ENCODE measurements at regions of chrX and their contacts with region 1.

Region 1: DNA sequence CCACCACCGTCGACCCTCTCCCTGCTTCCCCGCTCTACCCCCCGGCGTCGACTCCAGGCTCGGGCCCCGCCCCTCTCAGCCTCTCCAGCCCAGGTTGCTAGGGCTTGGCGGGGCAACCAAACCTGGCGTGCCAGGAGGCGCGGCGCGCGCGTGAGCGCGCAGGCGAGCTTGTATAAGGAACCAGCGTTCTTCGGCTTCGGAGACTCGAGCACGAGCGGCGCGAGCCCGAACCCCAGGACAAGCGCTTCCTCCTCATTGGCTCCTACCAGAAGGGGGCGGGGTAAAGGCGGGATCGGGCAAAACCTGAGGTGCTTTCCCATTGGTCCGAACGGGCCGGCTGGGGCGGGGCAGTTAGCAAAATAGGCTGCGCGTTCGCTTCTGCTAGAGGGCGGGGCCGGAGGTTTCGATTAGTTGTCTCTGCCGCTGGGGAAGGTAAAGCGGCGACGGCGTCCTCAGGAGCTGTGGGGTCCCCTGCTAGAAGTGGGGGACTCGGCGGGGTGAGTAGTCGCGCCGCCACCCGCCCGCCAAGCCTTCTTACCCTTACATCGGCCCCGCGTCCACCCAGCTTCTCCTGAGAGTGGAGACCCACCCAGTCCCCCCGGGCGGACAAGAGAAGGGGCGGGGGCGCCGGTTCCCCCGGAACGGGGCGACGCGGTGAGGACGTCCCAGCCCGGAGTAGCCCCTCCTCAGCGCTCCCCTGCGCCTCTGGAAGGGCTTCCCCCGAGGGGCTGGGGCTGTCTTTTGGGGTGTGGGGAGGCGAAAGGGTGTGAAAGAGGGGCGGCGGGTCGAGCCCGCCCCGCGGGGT is at the start of gene CDKL5:
- DNase-seq: peak; percentile 95
- ATAC-seq: peak; percentile 92
- H3K4me3 ChIP-seq: peak within 1 kb of the TSS; percentile 71 to 91 (median 75)
- H3K4me3 Mint-ChIP-seq: peak within 1 kb of the TSS; percentile 92
- H3K27ac ChIP-seq: peak within 1 kb of the TSS; percentile 82 to 86
- H3K27ac Mint-ChIP-seq: peak within 1 kb of the TSS; percentile 94
- H3K4me1 ChIP-seq: peaks cover 8 to 12% of the 10 kb centered on the region in 2 donors
- H3K4me1 Mint-ChIP-seq: peaks cover 12% of the 10 kb centered on the region
- H3K27me3 ChIP-seq: no peaks in the 10 kb centered on the region
- H3K27me3 Mint-ChIP-seq: no peaks in the 10 kb centered on the region
- CTCF ChIP-seq: no peak
- total RNA-seq, gene CDKL5: 4.6 and 4.7 TPM in 2 replicates

Region 2: DNA sequence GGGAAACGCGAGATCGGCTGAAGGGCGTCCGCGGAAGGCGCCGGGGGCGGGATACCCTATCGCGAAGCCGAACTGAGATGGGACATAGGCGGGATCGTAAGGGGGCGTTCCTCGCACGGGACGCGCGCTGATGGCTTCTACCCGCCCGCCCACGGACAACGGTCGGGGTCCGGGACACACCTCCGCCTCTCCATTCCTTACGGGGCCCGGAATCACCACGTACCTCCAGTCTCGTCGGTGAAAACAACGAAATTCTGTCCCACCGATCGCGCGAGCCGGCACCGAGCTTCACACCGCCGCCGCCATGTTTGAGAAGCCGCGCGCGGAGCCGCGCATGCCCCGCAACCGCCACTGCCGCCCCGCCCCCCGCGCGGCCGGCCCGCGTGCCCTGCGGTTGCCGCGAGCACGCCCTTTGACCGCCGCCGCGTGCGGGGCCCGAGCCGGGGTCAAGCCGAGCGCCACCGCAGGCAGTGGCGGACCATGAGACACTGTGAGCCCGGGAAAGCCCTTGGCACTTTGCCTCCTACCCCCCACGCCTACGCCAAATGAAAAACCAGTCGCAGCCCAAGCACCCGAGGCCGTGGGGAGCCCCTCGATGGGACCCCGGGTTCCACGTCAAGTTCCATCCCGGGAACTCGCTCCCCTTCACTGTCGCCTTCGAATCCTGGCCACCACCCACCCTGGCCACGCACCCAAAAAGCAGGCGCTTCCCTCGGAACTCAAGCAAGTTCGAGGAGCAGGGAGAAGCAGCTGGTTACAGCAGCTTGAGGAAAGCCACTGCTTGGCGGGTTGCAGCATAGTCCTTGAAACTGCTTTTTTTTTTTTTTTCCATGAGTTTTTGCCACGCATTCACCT is 70.8 kb before region 1 on chrX and contains the start of gene SCML2:
- CTCF ChIA-PET with region 1: interaction called, 3 read pairs
- POLR2A ChIA-PET with region 1: no interaction called
- intact Hi-C with region 1: loop called (anchors 1 kb)
- DNase-seq: peak; percentile 57
- ATAC-seq: peak; percentile 71
- H3K4me3 ChIP-seq: peak within 1 kb of the TSS in 4 of 5 experiments; percentile 46 to 62 (median 55)
- H3K4me3 Mint-ChIP-seq: peak within 1 kb of the TSS; percentile 85
- H3K27ac ChIP-seq: no peak within 1 kb of the TSS
- H3K27ac Mint-ChIP-seq: peak within 1 kb of the TSS; percentile 26
- H3K4me1 ChIP-seq: peaks cover 3 to 10% of the 10 kb centered on the region in 2 donors
- H3K4me1 Mint-ChIP-seq: peaks cover 9% of the 10 kb centered on the region
- H3K27me3 ChIP-seq: peaks cover 0 to 7% (median 7%) of the 10 kb centered on the region in 4 experiments
- H3K27me3 Mint-ChIP-seq: no peaks in the 10 kb centered on the region
- CTCF ChIP-seq: no peak
- total RNA-seq, gene SCML2: 1.3 TPM in 2 replicates

Region 3: GRCh38 chrX:18674788-18675735 is 249.7 kb after region 1 on chrX:
- CTCF ChIA-PET with region 1: no interaction called
- POLR2A ChIA-PET with region 1: no interaction called
- intact Hi-C with region 1: loop called (anchors 1 kb)
- DNase-seq: peak; percentile 90
- ATAC-seq: peak; percentile 84
- H3K4me3 ChIP-seq: peak overlapping the region; percentile 57 to 86 (median 72)
- H3K4me3 Mint-ChIP-seq: peak overlapping the region; percentile 84
- H3K27ac ChIP-seq: peak overlapping the region; percentile 78 to 84
- H3K27ac Mint-ChIP-seq: peak overlapping the region; percentile 96
- H3K4me1 ChIP-seq: no peaks in the 10 kb centered on the region
- H3K4me1 Mint-ChIP-seq: peaks cover 10% of the 10 kb centered on the region
- H3K27me3 ChIP-seq: no peaks in the 10 kb centered on the region
- H3K27me3 Mint-ChIP-seq: no peaks in the 10 kb centered on the region
- CTCF ChIP-seq: no peak

Region 4: GRCh38 chrX:18886344-18887161 is 461.2 kb after region 1 on chrX:
- CTCF ChIA-PET with region 1: interaction called, 3 read pairs
- POLR2A ChIA-PET with region 1: no interaction called
- intact Hi-C with region 1: loop called (anchors 2 kb)
- DNase-seq: peak; percentile 69
- ATAC-seq: peak; percentile 83
- H3K4me3 ChIP-seq: peak overlapping the region; percentile 49 to 65 (median 58)
- H3K4me3 Mint-ChIP-seq: peak overlapping the region; percentile 95
- H3K27ac ChIP-seq: peak overlapping the region; percentile 59 to 75
- H3K27ac Mint-ChIP-seq: peak overlapping the region; percentile 97
- H3K4me1 ChIP-seq: peaks cover 14 to 20% of the 10 kb centered on the region in 2 donors
- H3K4me1 Mint-ChIP-seq: peaks cover 24% of the 10 kb centered on the region
- H3K27me3 ChIP-seq: no peaks in the 10 kb centered on the region
- H3K27me3 Mint-ChIP-seq: no peaks in the 10 kb centered on the region
- CTCF ChIP-seq: peak; percentile 60

Region 5: GRCh38 chrX:19334945-19335626 is 909.7 kb after region 1 on chrX:
- CTCF ChIA-PET with region 1: interaction called, 4 read pairs
- POLR2A ChIA-PET with region 1: no interaction called
- intact Hi-C with region 1: loop called (anchors 2 kb)
- DNase-seq: peak; percentile 27
- ATAC-seq: no peak
- H3K4me3 ChIP-seq: no peak overlapping the region
- H3K4me3 Mint-ChIP-seq: no peak overlapping the region
- H3K27ac ChIP-seq: no peak overlapping the region
- H3K27ac Mint-ChIP-seq: no peak overlapping the region
- H3K4me1 ChIP-seq: no peaks in the 10 kb centered on the region
- H3K4me1 Mint-ChIP-seq: no peaks in the 10 kb centered on the region
- H3K27me3 ChIP-seq: no peaks in the 10 kb centered on the region
- H3K27me3 Mint-ChIP-seq: no peaks in the 10 kb centered on the region
- CTCF ChIP-seq: peak; percentile 2

Region 6: GRCh38 chrX:19343535-19344408 is 918.4 kb after region 1 on chrX and contains the start of gene PDHA1:
- CTCF ChIA-PET with region 1: no interaction called
- POLR2A ChIA-PET with region 1: no interaction called
- intact Hi-C with region 1: loop called (anchors 1 kb)
- DNase-seq: peak; percentile 93
- ATAC-seq: peak; percentile 98
- H3K4me3 ChIP-seq: peak within 1 kb of the TSS; percentile 31 to 76 (median 63)
- H3K4me3 Mint-ChIP-seq: peak within 1 kb of the TSS; percentile 92
- H3K27ac ChIP-seq: peak within 1 kb of the TSS; percentile 59 to 94
- H3K27ac Mint-ChIP-seq: peak within 1 kb of the TSS; percentile 90
- H3K4me1 ChIP-seq: peaks cover 8 to 16% of the 10 kb centered on the region in 2 donors
- H3K4me1 Mint-ChIP-seq: peaks cover 17% of the 10 kb centered on the region
- H3K27me3 ChIP-seq: no peaks in the 10 kb centered on the region
- H3K27me3 Mint-ChIP-seq: no peaks in the 10 kb centered on the region
- CTCF ChIP-seq: no peak
- total RNA-seq, gene PDHA1: 106 and 115 TPM in 2 replicates